ENCODE measurements at regions of chr13 and their contacts with region 1.

Region 1: DNA sequence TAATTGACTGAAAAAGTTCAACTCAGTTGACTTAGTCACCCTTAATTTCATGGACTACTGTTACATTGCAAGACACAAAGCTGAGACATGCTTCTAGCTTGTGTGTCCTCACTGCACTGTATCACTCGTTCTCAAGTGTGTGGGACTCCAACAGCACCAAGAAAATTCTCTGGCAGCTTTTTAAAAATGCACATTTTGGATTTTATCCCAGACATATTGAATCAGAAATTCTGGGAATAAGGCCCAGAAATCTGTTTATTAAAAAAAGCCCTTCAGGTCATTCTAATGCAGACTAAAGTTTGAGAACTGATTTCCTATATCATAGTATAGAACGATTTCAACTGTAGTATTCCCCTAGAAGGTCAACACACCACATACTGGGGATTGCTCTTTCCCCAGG is 1485.3 kb downstream of the PCDH9 start:
- DNase-seq: no peak
- ATAC-seq: no peak
- H3K4me3 ChIP-seq: no peak overlapping the region
- H3K27ac ChIP-seq: no peak overlapping the region
- H3K4me1 ChIP-seq: no peaks in the 10 kb centered on the region
- H3K27me3 ChIP-seq: no peaks in the 10 kb centered on the region
- CTCF ChIP-seq: no peak
- EP300 ChIP-seq: no peak
- POLR2A ChIP-seq: no peak
- RAD21 ChIP-seq: no peak

Region 2: GRCh38 chr13:65479692-65480091 is 265.1 kb before region 1 on chr13:
- CTCF ChIA-PET with region 1: no interaction called
- POLR2A ChIA-PET with region 1: no interaction called
- RAD21 ChIA-PET with region 1: no interaction called
- SMC1A ChIA-PET with region 1: no interaction called
- in situ Hi-C with region 1: no loop called
- intact Hi-C with region 1: no loop called
- DNase-seq: no peak
- ATAC-seq: no peak
- H3K4me3 ChIP-seq: no peak overlapping the region
- H3K27ac ChIP-seq: no peak overlapping the region
- H3K4me1 ChIP-seq: no peaks in the 10 kb centered on the region
- H3K27me3 ChIP-seq: no peaks in the 10 kb centered on the region
- CTCF ChIP-seq: no peak
- EP300 ChIP-seq: no peak
- POLR2A ChIP-seq: no peak
- RAD21 ChIP-seq: no peak

Region 3: GRCh38 chr13:65613004-65613403 is 131.8 kb before region 1 on chr13:
- CTCF ChIA-PET with region 1: no interaction called
- POLR2A ChIA-PET with region 1: no interaction called
- RAD21 ChIA-PET with region 1: no interaction called
- SMC1A ChIA-PET with region 1: no interaction called
- in situ Hi-C with region 1: no loop called
- intact Hi-C with region 1: no loop called
- DNase-seq: no peak
- ATAC-seq: no peak
- H3K4me3 ChIP-seq: no peak overlapping the region
- H3K27ac ChIP-seq: no peak overlapping the region
- H3K4me1 ChIP-seq: no peaks in the 10 kb centered on the region
- H3K27me3 ChIP-seq: no peaks in the 10 kb centered on the region
- CTCF ChIP-seq: peak in 2 of 3 experiments; percentile 12 to 29; a peak in 2 of 6 replicates
- EP300 ChIP-seq: no peak
- POLR2A ChIP-seq: no peak
- RAD21 ChIP-seq: no peak

Region 4: DNA sequence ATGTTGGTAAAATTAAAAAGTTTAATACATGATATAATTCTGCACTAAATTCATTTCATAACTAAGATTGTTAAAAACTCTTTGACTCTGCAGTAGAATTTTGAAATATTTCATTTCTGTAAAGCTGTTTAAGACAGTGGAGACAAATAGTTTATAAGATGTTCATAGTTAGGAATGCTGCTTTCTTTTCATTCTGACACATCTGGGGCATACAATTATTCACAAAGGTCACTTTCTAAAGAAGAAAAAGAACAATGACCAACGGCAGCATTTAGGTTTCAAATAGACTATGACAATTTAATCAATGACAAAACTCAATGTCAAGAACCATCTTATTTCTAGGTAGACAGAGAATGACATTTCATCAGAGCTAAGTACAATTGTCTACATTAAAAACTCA is 63.2 kb after region 1 on chr13:
- CTCF ChIA-PET with region 1: no interaction called
- POLR2A ChIA-PET with region 1: no interaction called
- RAD21 ChIA-PET with region 1: no interaction called
- SMC1A ChIA-PET with region 1: no interaction called
- in situ Hi-C with region 1: loop called (anchors 10 kb)
- intact Hi-C with region 1: no loop called
- DNase-seq: no peak
- ATAC-seq: no peak
- H3K4me3 ChIP-seq: no peak overlapping the region
- H3K27ac ChIP-seq: no peak overlapping the region
- H3K4me1 ChIP-seq: no peaks in the 10 kb centered on the region
- H3K27me3 ChIP-seq: no peaks in the 10 kb centered on the region
- CTCF ChIP-seq: no peak
- EP300 ChIP-seq: no peak
- POLR2A ChIP-seq: no peak
- RAD21 ChIP-seq: no peak

Region 5: DNA sequence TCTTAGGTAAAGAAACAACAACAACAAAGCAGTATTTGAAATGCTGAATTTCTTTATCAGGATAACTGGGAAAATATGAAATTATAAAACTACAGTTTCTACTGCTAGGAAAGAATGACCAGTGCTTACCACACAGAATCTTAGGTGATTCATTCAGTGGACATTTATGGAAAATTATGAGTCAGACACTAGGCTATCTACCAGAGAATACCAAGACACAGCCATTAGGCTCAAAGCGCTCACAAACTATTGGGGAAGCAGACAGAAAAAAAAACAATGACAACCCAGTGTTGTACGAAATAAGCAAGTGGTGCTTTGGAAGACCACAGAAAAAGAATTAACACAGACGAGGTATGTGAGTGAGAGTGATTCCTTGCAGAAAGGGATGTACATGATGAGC is 465.8 kb after region 1 on chr13:
- CTCF ChIA-PET with region 1: no interaction called
- POLR2A ChIA-PET with region 1: no interaction called
- RAD21 ChIA-PET with region 1: no interaction called
- SMC1A ChIA-PET with region 1: no interaction called
- in situ Hi-C with region 1: no loop called
- intact Hi-C with region 1: no loop called
- DNase-seq: no peak
- ATAC-seq: no peak
- H3K4me3 ChIP-seq: no peak overlapping the region
- H3K27ac ChIP-seq: no peak overlapping the region
- H3K4me1 ChIP-seq: no peaks in the 10 kb centered on the region
- H3K27me3 ChIP-seq: no peaks in the 10 kb centered on the region
- CTCF ChIP-seq: no peak
- EP300 ChIP-seq: no peak
- POLR2A ChIP-seq: no peak
- RAD21 ChIP-seq: no peak

Region 6: DNA sequence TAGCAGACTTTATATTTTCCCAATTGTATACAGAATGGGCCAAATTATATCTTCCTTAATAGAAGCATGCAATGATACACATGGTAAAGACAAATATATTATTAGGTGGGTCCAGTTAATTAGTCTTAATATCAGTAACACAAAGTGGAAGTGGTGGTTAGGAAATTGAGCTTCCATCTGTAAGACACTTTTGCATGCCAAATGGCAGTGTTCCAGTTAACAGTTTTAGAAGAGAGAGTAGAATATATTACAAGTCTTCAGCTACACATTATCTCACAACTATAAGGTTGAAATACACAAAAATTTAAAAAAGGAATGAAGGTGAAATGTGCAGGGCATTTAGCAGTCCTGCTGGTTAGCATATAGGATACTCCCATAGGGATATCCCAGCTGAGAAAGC is 948.8 kb after region 1 on chr13:
- CTCF ChIA-PET with region 1: no interaction called
- POLR2A ChIA-PET with region 1: no interaction called
- RAD21 ChIA-PET with region 1: no interaction called
- SMC1A ChIA-PET with region 1: no interaction called
- in situ Hi-C with region 1: no loop called
- intact Hi-C with region 1: no loop called
- DNase-seq: no peak
- ATAC-seq: no peak
- H3K4me3 ChIP-seq: no peak overlapping the region
- H3K27ac ChIP-seq: no peak overlapping the region
- H3K4me1 ChIP-seq: no peaks in the 10 kb centered on the region
- H3K27me3 ChIP-seq: no peaks in the 10 kb centered on the region
- CTCF ChIP-seq: no peak
- EP300 ChIP-seq: no peak
- POLR2A ChIP-seq: no peak
- RAD21 ChIP-seq: no peak